ENCODE measurements at regions of chr19 and their contacts with region 1.

Region 1: GRCh38 chr19:54390942-54391577 is 24.2 kb upstream of the TTYH1 start:
- DNase-seq: peak; percentile 52 to 88 (median 72)
- ATAC-seq: peak in 1 of 2 donors; percentile 27
- H3K4me3 Mint-ChIP-seq: peak overlapping the region in 9 of 10 donors; percentile 5 to 93 (median 64)
- H3K27ac Mint-ChIP-seq: peak overlapping the region; percentile 35 to 91 (median 76)
- H3K4me1 Mint-ChIP-seq: peaks cover 19 to 45% (median 40%) of the 10 kb centered on the region in 4 donors
- H3K27me3 Mint-ChIP-seq: peaks cover 0 to 9% (median 6%) of the 10 kb centered on the region in 5 donors

Region 2: DNA sequence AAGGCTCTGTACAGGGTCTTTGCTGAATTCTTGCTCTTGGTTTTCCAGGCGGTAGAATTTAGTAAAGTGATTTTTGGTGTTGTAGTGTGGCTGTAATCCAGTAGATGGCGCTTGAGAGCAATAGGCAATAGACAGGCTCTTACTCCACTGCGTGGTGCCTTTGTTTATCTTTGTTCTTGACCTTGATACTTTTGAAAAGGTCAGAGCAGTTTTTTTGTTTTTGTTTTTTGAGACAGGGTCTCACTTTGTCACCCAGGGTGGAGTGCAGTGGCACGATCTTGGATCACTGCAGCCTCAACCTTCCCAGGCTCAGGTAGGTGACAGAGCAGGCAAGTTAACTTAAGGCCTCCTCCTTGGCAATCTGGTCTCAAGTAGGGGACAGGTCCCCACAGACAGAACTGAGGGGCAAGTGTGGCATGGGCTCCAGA is 65.9 kb before region 1 on chr19:
- POLR2A ChIA-PET with region 1: interaction called, 25 read pairs
- DNase-seq: peak in 9 of 10 donors; percentile 15 to 76 (median 57)
- ATAC-seq: peak; percentile 70 to 84
- H3K4me3 Mint-ChIP-seq: peak overlapping the region in 1 of 10 donors; percentile 24
- H3K27ac Mint-ChIP-seq: peak overlapping the region in 2 of 10 donors; percentile 25 to 64
- H3K4me1 Mint-ChIP-seq: peaks cover 9 to 38% (median 23%) of the 10 kb centered on the region in 4 donors
- H3K27me3 Mint-ChIP-seq: peaks cover 2 to 9% (median 5%) of the 10 kb centered on the region in 5 donors

Region 3: GRCh38 chr19:54364775-54365257 is 26.2 kb before region 1 on chr19 and contains the start of gene LAIR1:
- POLR2A ChIA-PET with region 1: interaction called, 32 read pairs
- DNase-seq: peak; percentile 24 to 75 (median 48)
- ATAC-seq: peak; percentile 82 to 84
- H3K4me3 Mint-ChIP-seq: peak within 1 kb of the TSS; percentile 84 to 98 (median 96)
- H3K27ac Mint-ChIP-seq: peak within 1 kb of the TSS; percentile 90 to 97 (median 95)
- H3K4me1 Mint-ChIP-seq: peaks cover 38 to 87% (median 72%) of the 10 kb centered on the region in 4 donors
- H3K27me3 Mint-ChIP-seq: no peaks in the 10 kb centered on the region
- polyA plus RNA-seq, gene LAIR1: 58.3 to 104 (median 59.9) TPM

Region 4: GRCh38 chr19:54373781-54374631 is 17.1 kb before region 1 on chr19:
- POLR2A ChIA-PET with region 1: interaction called, 39 read pairs
- DNase-seq: no peak
- ATAC-seq: no peak
- H3K4me3 Mint-ChIP-seq: peak overlapping the region in 9 of 10 donors; percentile 16 to 86 (median 68)
- H3K27ac Mint-ChIP-seq: peak overlapping the region in 3 of 10 donors; percentile 6 to 48 (median 40)
- H3K4me1 Mint-ChIP-seq: peaks cover 38 to 89% (median 80%) of the 10 kb centered on the region in 4 donors
- H3K27me3 Mint-ChIP-seq: no peaks in the 10 kb centered on the region

Region 5: DNA sequence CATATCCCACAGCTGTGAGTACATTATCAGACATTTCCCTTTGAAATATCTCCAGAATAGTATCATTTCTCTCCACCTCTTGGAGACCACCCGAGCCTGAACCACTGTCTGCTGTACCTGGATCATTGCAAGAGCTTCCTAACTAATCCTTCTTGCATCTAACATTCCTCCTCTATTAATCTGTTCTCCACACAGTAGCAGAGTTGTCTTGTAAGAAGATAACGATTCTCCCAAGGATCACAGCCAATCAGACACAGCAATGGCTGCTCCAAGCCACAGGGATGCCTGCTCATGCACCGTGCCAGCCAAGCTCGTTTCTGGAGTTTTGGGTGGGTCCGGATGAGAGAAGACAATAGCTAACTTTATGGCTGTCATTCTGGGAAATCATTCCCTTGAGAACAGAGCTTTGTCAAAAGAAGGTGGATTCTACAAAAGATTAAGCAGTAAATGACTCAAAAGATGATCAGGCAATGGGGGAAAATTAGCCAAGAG is 11.8 kb before region 1 on chr19:
- POLR2A ChIA-PET with region 1: interaction called, 39 read pairs
- DNase-seq: no peak
- ATAC-seq: no peak
- H3K4me3 Mint-ChIP-seq: peak overlapping the region in 8 of 10 donors; percentile 4 to 74 (median 58)
- H3K27ac Mint-ChIP-seq: peak overlapping the region in 4 of 10 donors; percentile 15 to 79 (median 53)
- H3K4me1 Mint-ChIP-seq: peaks cover 34 to 66% (median 62%) of the 10 kb centered on the region in 4 donors
- H3K27me3 Mint-ChIP-seq: no peaks in the 10 kb centered on the region

Measured in naive thymus-derived CD8-positive, alpha-beta T cell (primary cell).